ENCODE measurements at regions of chr3 and their contacts with region 1.

Region 1: GRCh38 chr3:11155341-11156025 is 1.2 kb downstream of the HRH1 start:
- DNase-seq: peak; percentile 78 to 87
- ATAC-seq: peak; percentile 91 to 98
- H3K4me3 ChIP-seq: peak overlapping the region; percentile 56
- H3K27ac ChIP-seq: peak overlapping the region; percentile 66 to 83; a peak in 5 of 6 replicates
- H3K4me1 ChIP-seq: peaks cover 7% of the 10 kb centered on the region; the same call in 2 of the 3 replicates
- CTCF ChIP-seq: peak; percentile 83
- EP300 ChIP-seq: no peak
- POLR2A ChIP-seq: no peak
- RAD21 ChIP-seq: peak; percentile 78 to 79

Region 2: GRCh38 chr3:11085093-11085840 is 70.2 kb before region 1 on chr3:
- CTCF ChIA-PET with region 1: interaction called, 11 read pairs
- POLR2A ChIA-PET with region 1: no interaction called
- DNase-seq: no peak
- ATAC-seq: no peak
- H3K4me3 ChIP-seq: no peak overlapping the region
- H3K27ac ChIP-seq: 0 out of 6 replicates have a peak overlapping the region, but pooled peaks of 1 of the 2 experiments have one; percentile 6
- H3K4me1 ChIP-seq: peaks cover 20% of the 10 kb centered on the region
- CTCF ChIP-seq: no peak
- EP300 ChIP-seq: no peak
- POLR2A ChIP-seq: no peak
- RAD21 ChIP-seq: no peak

Region 3: DNA sequence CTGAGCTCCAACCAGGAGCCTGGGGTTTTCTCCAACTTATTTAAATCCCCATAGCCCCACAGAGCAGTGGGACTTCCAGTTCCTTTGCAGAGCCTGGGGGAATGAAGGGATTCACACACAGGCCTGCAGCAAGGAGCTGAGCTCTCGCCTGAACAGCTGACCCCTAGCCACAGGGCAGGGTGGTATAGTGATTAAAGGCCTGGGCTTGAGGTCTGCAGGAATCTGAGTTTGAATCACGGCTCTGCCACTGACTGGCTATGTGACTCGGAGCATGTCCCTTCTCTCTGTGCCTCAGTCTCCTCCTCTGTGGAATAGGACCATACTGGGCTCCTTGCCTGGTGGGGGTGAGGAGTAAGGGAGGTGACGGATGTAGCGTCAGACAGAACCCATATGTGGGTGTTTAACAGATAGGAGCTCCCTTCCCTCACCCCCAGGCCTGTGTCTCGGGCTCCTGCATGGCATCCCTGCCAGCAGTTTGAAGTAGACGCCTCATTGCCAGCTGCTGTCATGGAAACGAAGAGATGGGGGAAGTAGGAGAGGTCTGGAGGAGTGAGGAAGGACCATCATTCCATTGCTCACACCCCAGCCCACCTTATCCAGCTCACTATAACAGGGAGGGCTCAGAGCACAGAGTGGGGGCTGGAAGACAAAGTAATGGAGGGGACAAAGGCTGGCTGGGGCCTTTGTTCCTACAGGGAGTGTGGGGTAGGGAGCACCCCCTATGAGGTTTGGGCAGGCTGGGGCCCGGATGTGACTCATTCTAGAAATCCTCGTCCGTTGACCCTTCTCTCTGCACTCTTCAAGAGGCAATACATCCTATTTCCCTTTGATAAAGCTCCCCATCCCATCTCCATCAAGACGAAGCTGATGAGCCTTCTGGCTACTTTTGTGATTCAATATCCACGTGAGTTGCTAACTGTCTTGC is 13.7 kb after region 1 on chr3:
- CTCF ChIA-PET with region 1: interaction called, 26 read pairs
- POLR2A ChIA-PET with region 1: no interaction called
- DNase-seq: no peak
- ATAC-seq: no peak; a peak in 1 of 6 replicates
- H3K4me3 ChIP-seq: no peak overlapping the region
- H3K27ac ChIP-seq: no peak overlapping the region
- H3K4me1 ChIP-seq: no peaks in the 10 kb centered on the region
- CTCF ChIP-seq: no peak
- EP300 ChIP-seq: no peak
- POLR2A ChIP-seq: no peak
- RAD21 ChIP-seq: no peak

Region 4: GRCh38 chr3:11201246-11202024 is 46.0 kb after region 1 on chr3:
- CTCF ChIA-PET with region 1: interaction called, 74 read pairs
- POLR2A ChIA-PET with region 1: no interaction called
- DNase-seq: peak in 1 of 2 experiments; percentile 44
- ATAC-seq: peak in 1 of 2 experiments; percentile 30; a peak in 2 of 6 replicates
- H3K4me3 ChIP-seq: no peak overlapping the region
- H3K27ac ChIP-seq: peak overlapping the region in 1 of 2 experiments; percentile 61; a peak in 3 of 6 replicates
- H3K4me1 ChIP-seq: peaks cover 17% of the 10 kb centered on the region
- CTCF ChIP-seq: no peak
- EP300 ChIP-seq: no peak
- POLR2A ChIP-seq: no peak
- RAD21 ChIP-seq: no peak

Region 5: DNA sequence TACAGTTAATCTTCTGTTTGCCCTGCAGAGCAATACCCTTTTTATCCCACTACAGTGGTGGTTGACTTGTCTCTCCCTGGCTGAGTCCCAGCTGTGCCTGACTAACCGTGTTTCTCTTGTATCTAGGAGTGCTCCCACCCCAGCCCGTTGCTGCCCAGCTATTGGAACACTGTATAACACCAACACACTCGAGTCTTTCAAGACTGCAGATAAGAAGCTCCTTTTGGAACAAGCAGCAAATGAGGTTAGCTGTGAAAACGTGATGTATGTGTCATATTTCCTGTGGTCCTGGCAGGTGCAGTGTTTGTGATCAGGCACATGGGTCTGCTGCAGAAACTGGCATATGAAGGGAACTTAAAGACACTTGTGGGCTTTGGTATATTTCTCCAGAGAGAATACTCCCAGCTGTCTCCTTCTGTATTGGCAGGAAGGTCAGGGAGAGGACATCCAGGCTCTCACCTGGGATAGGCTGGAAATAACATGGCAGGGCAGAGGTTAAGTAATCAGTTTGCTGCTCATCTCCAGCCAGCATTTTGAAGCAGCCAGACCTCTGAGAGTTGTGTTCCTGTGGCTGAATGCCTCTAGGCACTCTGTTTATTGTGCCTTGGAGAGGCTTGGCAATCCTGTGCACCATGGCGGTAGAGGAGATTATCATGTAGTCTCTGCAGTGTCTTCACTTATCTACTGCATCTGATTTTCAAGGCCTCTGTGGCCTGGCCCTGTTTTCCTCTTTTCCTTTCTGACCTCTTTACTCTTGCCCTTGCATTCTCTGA is 151.5 kb after region 1 on chr3:
- CTCF ChIA-PET with region 1: interaction called, 11 read pairs
- POLR2A ChIA-PET with region 1: no interaction called
- DNase-seq: no peak
- ATAC-seq: no peak
- H3K4me3 ChIP-seq: no peak overlapping the region
- H3K27ac ChIP-seq: no peak overlapping the region
- H3K4me1 ChIP-seq: peaks cover 12% of the 10 kb centered on the region
- CTCF ChIP-seq: no peak
- EP300 ChIP-seq: no peak
- POLR2A ChIP-seq: no peak
- RAD21 ChIP-seq: no peak

Region 6: GRCh38 chr3:11498646-11499045 is 343.2 kb after region 1 on chr3:
- CTCF ChIA-PET with region 1: no interaction called
- POLR2A ChIA-PET with region 1: no interaction called
- DNase-seq: peak in 1 of 2 experiments; percentile 30
- ATAC-seq: peak; percentile 77 to 91
- H3K4me3 ChIP-seq: no peak overlapping the region
- H3K27ac ChIP-seq: peak overlapping the region in 1 of 2 experiments; percentile 66; a peak in 3 of 6 replicates
- H3K4me1 ChIP-seq: peaks cover 11% of the 10 kb centered on the region
- CTCF ChIP-seq: no peak
- EP300 ChIP-seq: no peak
- POLR2A ChIP-seq: no peak
- RAD21 ChIP-seq: no peak

Measured in A549 (cell line).